ENCODE measurements at regions of chr18 and their contacts with region 1.

Region 1: GRCh38 chr18:31942999-31943865 is at the start of gene TRAPPC8:
- DNase-seq: peak; percentile 82 to 95 (median 90)
- ATAC-seq: peak; percentile 87 to 89 (median 88)
- H3K4me3 ChIP-seq: peak within 1 kb of the TSS; percentile 81 to 97
- H3K4me3 Mint-ChIP-seq: peak within 1 kb of the TSS; percentile 93 to 99 (median 98)
- H3K27ac ChIP-seq: peak within 1 kb of the TSS; percentile 92
- H3K27ac Mint-ChIP-seq: peak within 1 kb of the TSS; percentile 98 to 99
- H3K4me1 ChIP-seq: peaks cover 17 to 31% of the 10 kb centered on the region in 2 experiments
- H3K4me1 Mint-ChIP-seq: peaks cover 46 to 54% (median 52%) of the 10 kb centered on the region in 3 donors
- H3K27me3 ChIP-seq: no peaks in the 10 kb centered on the region
- H3K27me3 Mint-ChIP-seq: no peaks in the 10 kb centered on the region
- total RNA-seq, gene TRAPPC8: 44.7 to 62.0 (median 51.8) TPM

Region 2: GRCh38 chr18:31156821-31157777 is 786.1 kb before region 1 on chr18:
- CTCF ChIA-PET with region 1: no interaction called
- POLR2A ChIA-PET with region 1: no interaction called
- DNase-seq: no peak
- ATAC-seq: no peak
- H3K4me3 ChIP-seq: no peak overlapping the region
- H3K4me3 Mint-ChIP-seq: no peak overlapping the region
- H3K27ac ChIP-seq: no peak overlapping the region
- H3K27ac Mint-ChIP-seq: no peak overlapping the region
- H3K4me1 ChIP-seq: peaks cover 0 to 9% of the 10 kb centered on the region in 2 experiments
- H3K4me1 Mint-ChIP-seq: peaks cover 0 to 2% (median 0%) of the 10 kb centered on the region in 3 donors
- H3K27me3 ChIP-seq: no peaks in the 10 kb centered on the region
- H3K27me3 Mint-ChIP-seq: no peaks in the 10 kb centered on the region

Region 3: GRCh38 chr18:31667185-31667584 is 276.0 kb before region 1 on chr18:
- CTCF ChIA-PET with region 1: no interaction called
- POLR2A ChIA-PET with region 1: no interaction called
- DNase-seq: no peak
- ATAC-seq: no peak
- H3K4me3 ChIP-seq: no peak overlapping the region
- H3K4me3 Mint-ChIP-seq: no peak overlapping the region
- H3K27ac ChIP-seq: no peak overlapping the region
- H3K27ac Mint-ChIP-seq: no peak overlapping the region
- H3K4me1 ChIP-seq: no peaks in the 10 kb centered on the region
- H3K4me1 Mint-ChIP-seq: no peaks in the 10 kb centered on the region
- H3K27me3 ChIP-seq: peaks cover 0 to 2% of the 10 kb centered on the region in 2 experiments
- H3K27me3 Mint-ChIP-seq: no peaks in the 10 kb centered on the region

Region 4: DNA sequence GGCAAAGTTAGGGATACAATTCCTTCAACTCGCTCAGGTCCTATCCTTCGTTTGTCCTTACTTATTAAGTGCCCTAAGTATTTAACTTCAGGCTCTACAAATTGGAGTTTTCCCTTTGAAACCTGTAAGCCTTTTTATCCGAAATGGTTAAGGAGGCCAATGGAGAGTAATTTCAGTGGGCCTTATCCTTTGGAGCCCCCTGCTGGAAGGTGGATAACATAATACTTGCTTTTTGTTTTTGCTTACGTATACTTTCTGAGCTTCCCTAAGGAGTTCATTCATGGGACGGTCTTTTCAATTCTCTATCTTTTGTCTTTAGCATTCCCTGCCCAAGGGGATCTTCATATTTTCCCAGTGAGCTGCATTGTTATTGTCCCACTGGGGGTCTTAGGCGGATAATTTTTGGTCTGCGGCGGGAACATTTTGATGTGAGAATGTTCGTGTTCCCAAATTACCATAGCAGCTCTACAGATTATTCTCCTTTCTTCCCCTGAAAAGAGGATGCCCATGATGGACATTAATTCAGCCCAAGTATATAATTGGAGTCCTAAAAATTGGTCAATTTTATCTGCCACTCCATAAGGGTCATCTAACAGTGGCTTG is 34.1 kb after region 1 on chr18:
- CTCF ChIA-PET with region 1: interaction called in 1 of 2 experiments, 16 read pairs
- POLR2A ChIA-PET with region 1: no interaction called
- DNase-seq: peak in 25 of 35 experiments; percentile 1 to 65 (median 15)
- ATAC-seq: no peak
- H3K4me3 ChIP-seq: no peak overlapping the region
- H3K4me3 Mint-ChIP-seq: no peak overlapping the region
- H3K27ac ChIP-seq: no peak overlapping the region
- H3K27ac Mint-ChIP-seq: no peak overlapping the region
- H3K4me1 ChIP-seq: no peaks in the 10 kb centered on the region
- H3K4me1 Mint-ChIP-seq: no peaks in the 10 kb centered on the region
- H3K27me3 ChIP-seq: no peaks in the 10 kb centered on the region
- H3K27me3 Mint-ChIP-seq: no peaks in the 10 kb centered on the region

Region 5: DNA sequence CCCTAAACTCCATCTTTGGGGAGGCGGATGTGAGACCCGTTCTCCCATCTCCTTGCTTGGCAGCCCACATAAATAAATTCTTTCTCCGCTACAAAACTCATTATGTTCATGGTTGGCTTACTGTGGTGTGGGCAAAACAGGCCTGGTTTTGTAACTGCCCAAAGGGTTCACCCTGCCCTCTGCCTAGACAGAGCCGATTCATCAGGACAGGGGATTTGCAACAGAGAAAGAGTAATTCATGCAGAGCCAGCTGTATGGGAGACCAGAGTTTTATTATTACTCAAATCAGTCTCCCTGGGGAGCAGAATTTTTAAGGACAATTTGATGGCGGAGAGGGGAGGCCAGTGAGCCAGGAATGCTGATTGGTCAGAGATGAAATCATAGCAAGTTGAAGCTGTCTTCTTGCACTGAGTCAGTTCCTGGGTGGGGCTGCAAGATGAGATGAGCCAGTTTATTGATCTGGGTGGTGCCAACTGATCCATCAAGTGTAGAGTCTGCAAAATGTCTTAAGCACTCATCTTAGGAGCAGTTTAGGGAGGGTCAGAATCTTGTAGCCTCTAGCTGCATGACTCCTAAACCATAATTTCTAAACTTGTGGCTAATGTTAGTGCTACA is 67.0 kb after region 1 on chr18:
- CTCF ChIA-PET with region 1: no interaction called
- POLR2A ChIA-PET with region 1: no interaction called
- DNase-seq: no peak
- ATAC-seq: peak in 1 of 4 experiments; percentile 16
- H3K4me3 ChIP-seq: no peak overlapping the region
- H3K4me3 Mint-ChIP-seq: no peak overlapping the region
- H3K27ac ChIP-seq: no peak overlapping the region
- H3K27ac Mint-ChIP-seq: peak overlapping the region in 1 of 2 donors; percentile 11
- H3K4me1 ChIP-seq: peaks cover 0 to 8% of the 10 kb centered on the region in 2 experiments
- H3K4me1 Mint-ChIP-seq: peaks cover 9 to 15% (median 10%) of the 10 kb centered on the region in 3 donors
- H3K27me3 ChIP-seq: no peaks in the 10 kb centered on the region
- H3K27me3 Mint-ChIP-seq: no peaks in the 10 kb centered on the region

Region 6: GRCh38 chr18:32092422-32093101 is 149.3 kb after region 1 on chr18:
- CTCF ChIA-PET with region 1: interaction called in 1 of 2 experiments, 12 read pairs
- POLR2A ChIA-PET with region 1: interaction called, 3 to 16 read pairs
- DNase-seq: peak; percentile 96 to 100 (median 99)
- ATAC-seq: peak; percentile 86 to 94 (median 89)
- H3K4me3 ChIP-seq: peak overlapping the region; percentile 91 to 96
- H3K4me3 Mint-ChIP-seq: peak overlapping the region; percentile 95 to 97 (median 96)
- H3K27ac ChIP-seq: peak overlapping the region; percentile 98
- H3K27ac Mint-ChIP-seq: peak overlapping the region; percentile 97
- H3K4me1 ChIP-seq: peaks cover 39 to 46% of the 10 kb centered on the region in 2 experiments
- H3K4me1 Mint-ChIP-seq: peaks cover 45 to 50% (median 50%) of the 10 kb centered on the region in 3 donors
- H3K27me3 ChIP-seq: no peaks in the 10 kb centered on the region
- H3K27me3 Mint-ChIP-seq: no peaks in the 10 kb centered on the region

Region 7: GRCh38 chr18:32110005-32110404 is 166.8 kb after region 1 on chr18:
- CTCF ChIA-PET with region 1: no interaction called
- POLR2A ChIA-PET with region 1: interaction called in 1 of 2 experiments, 13 read pairs
- DNase-seq: no peak
- ATAC-seq: no peak
- H3K4me3 ChIP-seq: no peak overlapping the region
- H3K4me3 Mint-ChIP-seq: no peak overlapping the region
- H3K27ac ChIP-seq: no peak overlapping the region
- H3K27ac Mint-ChIP-seq: no peak overlapping the region
- H3K4me1 ChIP-seq: peaks cover 6 to 21% of the 10 kb centered on the region in 2 experiments
- H3K4me1 Mint-ChIP-seq: peaks cover 69 to 76% (median 75%) of the 10 kb centered on the region in 3 donors
- H3K27me3 ChIP-seq: no peaks in the 10 kb centered on the region
- H3K27me3 Mint-ChIP-seq: no peaks in the 10 kb centered on the region